ENCODE measurements at regions of chr3 and their contacts with region 1.

Region 1: GRCh38 chr3:114056130-114057010 is at the starts of genes CCDC191 and QTRT2:
- DNase-seq: peak; percentile 98 to 99
- H3K4me3 ChIP-seq: peak within 1 kb of the TSS; percentile 62 to 81 (median 74)
- H3K27ac ChIP-seq: peak within 1 kb of the TSS; percentile 87 to 88
- H3K4me1 ChIP-seq: no peaks in the 10 kb centered on the region
- H3K27me3 ChIP-seq: no peaks in the 10 kb centered on the region
- CTCF ChIP-seq: no peak
- POLR2A ChIP-seq: no peak
- total RNA-seq, gene CCDC191: 4.3 to 13.2 (median 10.8) TPM
- total RNA-seq, gene QTRT2: 11.0 to 25.8 (median 15.1) TPM

Region 2: GRCh38 chr3:112598731-112599130 is 1457.6 kb before region 1 on chr3:
- intact Hi-C with region 1: loop called (anchors 5 kb)
- DNase-seq: no peak
- H3K4me3 ChIP-seq: no peak overlapping the region
- H3K27ac ChIP-seq: no peak overlapping the region
- H3K4me1 ChIP-seq: no peaks in the 10 kb centered on the region
- H3K27me3 ChIP-seq: no peaks in the 10 kb centered on the region
- CTCF ChIP-seq: no peak
- POLR2A ChIP-seq: no peak